ENCODE measurements at regions of chr13 and their contacts with region 1.

Region 1: DNA sequence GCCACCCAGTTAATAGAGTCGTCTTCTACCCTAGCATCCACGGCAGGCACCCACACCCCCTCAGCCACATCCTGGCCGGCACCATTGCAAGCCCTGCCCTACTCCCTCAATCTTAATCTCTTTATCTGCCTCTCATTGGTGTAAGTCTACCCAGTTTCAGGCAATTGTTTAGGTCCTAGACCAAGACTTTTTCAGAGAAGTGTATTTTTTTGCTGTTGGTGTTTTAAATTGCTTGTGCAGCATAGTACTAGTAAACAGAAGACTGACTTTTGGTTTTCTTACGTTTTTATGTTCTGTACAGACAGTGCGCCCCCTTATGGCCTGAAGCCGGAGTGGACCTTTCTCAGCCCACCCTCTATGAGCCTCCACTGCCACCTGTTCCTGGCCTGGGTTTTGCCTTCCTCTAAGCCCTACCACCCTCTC is 2.3 kb upstream of the LCP1 start:
- DNase-seq: peak; percentile 88
- H3K4me3 Mint-ChIP-seq: peak overlapping the region; percentile 72
- H3K27ac Mint-ChIP-seq: peak overlapping the region; percentile 98
- H3K4me1 Mint-ChIP-seq: peaks cover 25% of the 10 kb centered on the region
- H3K27me3 Mint-ChIP-seq: no peaks in the 10 kb centered on the region

Region 2: DNA sequence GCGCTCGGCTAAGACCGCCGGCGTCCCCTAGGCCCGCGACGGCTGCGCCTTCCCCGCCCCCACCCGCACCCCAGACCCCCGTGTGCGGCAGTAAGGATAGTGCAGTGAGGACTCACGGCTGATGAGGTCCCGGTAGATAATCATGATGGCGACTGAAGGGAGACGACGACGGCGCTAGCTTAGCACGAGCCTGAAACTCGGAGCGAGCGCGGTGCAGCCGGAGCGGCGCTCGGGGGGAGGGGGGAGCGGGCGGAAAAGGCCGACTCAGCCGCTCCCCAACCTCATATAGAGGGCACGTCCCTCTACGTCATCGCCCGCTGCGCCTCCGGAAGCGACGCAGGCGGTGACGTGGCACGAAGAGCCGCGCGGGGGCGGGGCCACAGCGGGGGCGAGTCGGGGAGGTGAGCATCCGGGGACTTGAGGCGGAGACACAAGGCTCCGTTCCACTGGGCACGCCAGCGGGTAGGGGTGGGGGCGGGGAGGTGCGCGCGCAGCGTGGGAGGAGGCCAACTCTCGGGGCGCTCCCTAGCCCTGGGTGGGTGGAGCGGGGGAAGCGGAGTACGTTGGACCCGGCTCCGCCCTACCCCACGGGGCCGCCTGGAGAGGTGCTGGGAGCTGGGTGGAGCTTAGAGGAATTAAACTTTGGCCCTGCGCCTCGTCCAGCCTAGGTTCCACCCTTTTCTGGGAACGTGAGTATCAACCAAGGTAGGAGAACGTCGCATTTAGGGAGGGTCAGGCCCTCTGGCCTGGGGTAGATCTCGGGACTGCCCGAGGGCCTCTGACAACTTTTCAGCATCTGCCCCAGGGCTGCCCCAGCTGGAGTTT is 843.1 kb before region 1 on chr13 and contains the start of gene TPT1:
- CTCF ChIA-PET with region 1: no interaction called
- intact Hi-C with region 1: loop called (anchors 1 kb)
- DNase-seq: peak; percentile 100
- H3K4me3 Mint-ChIP-seq: peak within 1 kb of the TSS; percentile 91
- H3K27ac Mint-ChIP-seq: peak within 1 kb of the TSS; percentile 99
- H3K4me1 Mint-ChIP-seq: peaks cover 43% of the 10 kb centered on the region
- H3K27me3 Mint-ChIP-seq: no peaks in the 10 kb centered on the region
- total RNA-seq, gene TPT1: 3,331 to 3,631 TPM

Region 3: GRCh38 chr13:45792827-45793303 is 391.4 kb before region 1 on chr13:
- CTCF ChIA-PET with region 1: no interaction called
- intact Hi-C with region 1: no loop called
- DNase-seq: no peak
- H3K4me3 Mint-ChIP-seq: no peak overlapping the region
- H3K27ac Mint-ChIP-seq: no peak overlapping the region
- H3K4me1 Mint-ChIP-seq: peaks cover 22% of the 10 kb centered on the region
- H3K27me3 Mint-ChIP-seq: no peaks in the 10 kb centered on the region

Region 4: DNA sequence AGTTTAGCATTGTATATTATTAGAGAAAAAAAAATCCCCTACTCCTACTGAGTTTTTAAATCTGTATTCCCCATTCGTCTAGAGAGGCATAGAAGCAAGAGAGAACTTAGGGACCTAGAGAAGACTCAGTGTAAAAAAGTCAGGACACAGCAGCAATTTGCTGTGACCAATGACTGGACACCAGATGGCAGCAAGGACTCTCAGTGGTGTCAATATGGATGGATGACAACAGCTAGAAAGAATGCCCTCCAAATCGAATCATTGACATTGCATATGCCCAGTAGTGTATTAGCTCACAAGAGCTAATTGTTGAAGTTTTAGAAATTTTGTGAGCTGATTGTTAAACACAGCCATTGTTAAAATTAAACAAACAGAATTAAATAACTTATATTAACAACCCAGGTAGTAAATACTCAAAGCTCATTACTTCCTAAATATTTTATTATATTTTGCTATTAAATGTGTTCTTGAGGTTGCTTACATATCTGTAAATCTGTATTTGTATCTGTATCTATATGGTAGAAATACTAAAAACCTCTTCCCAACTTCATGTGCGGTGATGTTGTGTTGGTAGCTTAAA is 376.7 kb before region 1 on chr13:
- CTCF ChIA-PET with region 1: no interaction called
- intact Hi-C with region 1: loop called (anchors 1 kb)
- DNase-seq: peak; percentile 55
- H3K4me3 Mint-ChIP-seq: no peak overlapping the region
- H3K27ac Mint-ChIP-seq: no peak overlapping the region
- H3K4me1 Mint-ChIP-seq: no peaks in the 10 kb centered on the region
- H3K27me3 Mint-ChIP-seq: no peaks in the 10 kb centered on the region

Region 5: GRCh38 chr13:46126552-46127357 is 57.5 kb before region 1 on chr13:
- CTCF ChIA-PET with region 1: interaction called, 5 read pairs
- intact Hi-C with region 1: loop called (anchors 1 kb)
- DNase-seq: peak; percentile 91
- H3K4me3 Mint-ChIP-seq: no peak overlapping the region
- H3K27ac Mint-ChIP-seq: peak overlapping the region; percentile 76
- H3K4me1 Mint-ChIP-seq: peaks cover 38% of the 10 kb centered on the region
- H3K27me3 Mint-ChIP-seq: no peaks in the 10 kb centered on the region

Region 6: DNA sequence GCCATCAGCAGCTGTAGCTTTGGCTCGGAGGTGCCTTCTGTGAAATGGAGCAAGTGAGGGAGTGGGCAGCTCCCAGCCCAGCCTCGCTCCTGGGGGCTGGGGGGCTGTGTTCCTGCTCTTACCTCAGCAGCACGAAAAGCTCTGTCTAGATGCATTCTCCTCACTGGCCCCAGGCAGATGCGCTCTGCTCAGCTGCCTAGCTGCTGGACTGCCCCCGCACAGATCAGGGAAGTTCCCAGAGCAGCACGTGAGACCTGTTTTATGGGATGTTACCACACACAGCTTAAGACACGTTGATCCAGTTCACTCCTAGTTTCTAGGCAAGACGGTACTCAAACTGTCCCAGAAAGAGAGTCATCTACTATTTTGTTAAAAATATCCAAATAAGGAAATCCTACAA is 15.9 kb before region 1 on chr13:
- CTCF ChIA-PET with region 1: interaction called, 17 read pairs
- intact Hi-C with region 1: loop called (anchors 1 kb)
- DNase-seq: peak; percentile 89
- H3K4me3 Mint-ChIP-seq: peak overlapping the region; percentile 67
- H3K27ac Mint-ChIP-seq: peak overlapping the region; percentile 94
- H3K4me1 Mint-ChIP-seq: peaks cover 92% of the 10 kb centered on the region
- H3K27me3 Mint-ChIP-seq: no peaks in the 10 kb centered on the region

Region 7: DNA sequence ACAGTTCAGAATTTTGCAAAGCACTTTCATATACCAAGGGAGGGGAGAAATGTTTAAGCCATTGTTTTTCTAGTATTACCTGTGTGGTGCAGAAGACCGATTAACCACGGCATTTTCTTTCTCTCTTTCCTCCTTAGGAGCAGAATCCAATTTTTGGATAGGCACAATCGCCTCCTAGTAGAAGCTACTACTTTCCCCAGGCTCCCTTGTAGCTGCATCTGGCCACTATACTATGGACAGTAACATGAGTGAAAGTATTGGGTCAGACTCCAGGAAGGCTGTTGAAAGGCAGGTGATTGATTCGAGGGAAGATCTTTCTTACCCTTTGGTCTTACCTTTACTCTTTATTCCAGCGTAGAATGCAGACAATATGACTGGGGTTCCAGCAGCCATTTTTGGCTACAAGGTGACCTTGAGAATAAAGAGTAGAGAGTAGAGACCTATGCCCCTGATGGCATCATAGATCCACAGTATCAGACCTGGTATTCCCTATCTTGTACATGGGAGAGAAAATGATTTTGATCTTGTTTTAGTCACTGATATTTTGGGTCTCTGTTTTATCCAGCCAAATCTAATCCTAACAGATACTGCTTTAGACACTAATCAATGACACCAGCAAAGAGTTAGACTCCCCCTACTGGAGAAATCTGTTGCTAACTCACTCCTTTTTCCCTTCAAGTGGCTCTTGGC is 104.4 kb after region 1 on chr13:
- CTCF ChIA-PET with region 1: interaction called, 4 read pairs
- intact Hi-C with region 1: loop called (anchors 1 kb)
- DNase-seq: no peak
- H3K4me3 Mint-ChIP-seq: no peak overlapping the region
- H3K27ac Mint-ChIP-seq: no peak overlapping the region
- H3K4me1 Mint-ChIP-seq: peaks cover 17% of the 10 kb centered on the region
- H3K27me3 Mint-ChIP-seq: no peaks in the 10 kb centered on the region

Region 8: GRCh38 chr13:46341112-46341711 is 156.9 kb after region 1 on chr13:
- CTCF ChIA-PET with region 1: no interaction called
- intact Hi-C with region 1: loop called (anchors 1 kb)
- DNase-seq: peak; percentile 78
- H3K4me3 Mint-ChIP-seq: peak overlapping the region; percentile 63
- H3K27ac Mint-ChIP-seq: peak overlapping the region; percentile 92
- H3K4me1 Mint-ChIP-seq: peaks cover 52% of the 10 kb centered on the region
- H3K27me3 Mint-ChIP-seq: no peaks in the 10 kb centered on the region